HCT116 (cell line): ENCODE measurements at regions of chr12 and their contacts with region 1.

Region 1: GRCh38 chr12:55817346-55818139 is at the starts of genes ORMDL2 and SARNP:
- DNase-seq: peak; percentile 100
- ATAC-seq: peak; percentile 95
- H3K4me3 ChIP-seq: peak within 1 kb of the TSS; percentile 76 to 91
- H3K27ac ChIP-seq: peak within 1 kb of the TSS; percentile 62
- H3K4me1 ChIP-seq: peaks cover 14 to 20% of the 10 kb centered on the region in 2 experiments
- H3K27me3 ChIP-seq: no peaks in the 10 kb centered on the region
- CTCF ChIP-seq: no peak
- POLR2A ChIP-seq: peak; percentile 63
- RAD21 ChIP-seq: no peak
- total RNA-seq, gene ORMDL2: 25.5 TPM
- total RNA-seq, gene SARNP: 82.4 TPM

Region 2: DNA sequence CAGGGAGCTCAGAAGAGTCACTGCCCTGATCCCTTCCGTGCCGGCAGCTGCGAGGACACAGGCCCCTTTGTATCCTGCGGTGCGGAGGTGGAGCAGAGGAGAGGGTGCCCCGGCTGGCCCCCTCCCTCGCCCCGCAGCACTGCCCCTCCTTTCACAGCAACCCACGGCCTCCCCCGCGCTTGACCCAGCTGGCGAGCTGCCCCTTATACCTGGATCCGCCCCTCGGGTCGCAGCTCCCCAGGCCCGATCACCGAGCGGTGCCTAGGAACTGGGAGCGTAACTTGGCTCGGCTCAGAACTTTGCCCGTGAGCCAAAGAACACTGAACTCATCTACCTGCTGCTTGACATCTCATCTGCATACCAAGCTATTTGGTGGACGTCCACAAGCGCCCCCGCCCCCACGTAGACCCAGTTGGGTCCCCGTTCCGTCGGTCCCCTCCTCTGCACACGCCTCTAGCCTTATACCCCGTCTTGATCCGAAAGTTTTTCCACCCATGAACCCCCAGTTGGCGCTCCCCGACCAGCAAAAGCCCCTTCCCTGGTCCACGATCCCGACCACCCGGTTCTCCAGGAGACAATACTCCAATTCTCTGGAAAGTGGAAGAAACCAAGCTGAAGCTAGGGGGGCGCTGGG is 12.5 kb after region 1 on chr12:
- CTCF ChIA-PET with region 1: interaction called, 14 read pairs
- POLR2A ChIA-PET with region 1: interaction called, 59 read pairs
- RAD21 ChIA-PET with region 1: no interaction called
- intact Hi-C with region 1: no loop called
- DNase-seq: no peak
- ATAC-seq: peak; percentile 54
- H3K4me3 ChIP-seq: peak overlapping the region; percentile 93 to 97
- H3K27ac ChIP-seq: peak overlapping the region; percentile 87
- H3K4me1 ChIP-seq: peaks cover 16 to 29% of the 10 kb centered on the region in 2 experiments; a peak in 3 of 4 replicates
- H3K27me3 ChIP-seq: no peaks in the 10 kb centered on the region
- CTCF ChIP-seq: no peak
- POLR2A ChIP-seq: no peak
- RAD21 ChIP-seq: no peak

Region 3: DNA sequence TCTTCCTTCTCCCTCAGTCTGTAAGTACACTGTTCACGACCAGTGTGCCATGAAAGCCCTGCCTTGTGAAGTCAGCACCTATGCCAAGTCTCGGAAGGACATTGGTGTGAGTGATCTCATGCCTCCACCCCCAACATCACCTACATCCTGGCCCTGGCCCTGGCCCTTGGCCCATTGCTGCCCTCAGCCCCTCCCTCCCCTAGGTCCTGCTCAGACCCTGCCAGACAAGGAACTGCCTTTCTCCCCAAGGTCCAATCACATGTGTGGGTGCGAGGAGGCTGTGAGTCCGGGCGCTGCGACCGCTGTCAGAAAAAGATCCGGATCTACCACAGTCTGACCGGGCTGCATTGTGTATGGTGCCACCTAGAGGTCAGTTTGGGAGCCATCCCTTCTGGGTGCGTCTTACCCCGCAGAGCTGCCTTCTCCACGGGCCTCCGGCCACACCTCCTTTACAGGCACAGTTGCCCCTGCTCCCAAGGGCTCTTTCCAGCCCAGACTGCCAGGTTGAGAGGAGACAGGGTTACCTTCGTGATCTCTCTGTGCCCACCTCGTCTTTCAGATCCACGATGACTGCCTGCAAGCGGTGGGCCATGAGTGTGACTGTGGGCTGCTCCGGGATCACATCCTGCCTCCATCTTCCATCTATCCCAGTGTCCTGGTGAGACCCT is 122.7 kb after region 1 on chr12:
- CTCF ChIA-PET with region 1: interaction called, 4 read pairs
- POLR2A ChIA-PET with region 1: interaction called, 4 read pairs
- RAD21 ChIA-PET with region 1: no interaction called
- intact Hi-C with region 1: loop called (anchors 1 kb)
- DNase-seq: peak; percentile 59
- ATAC-seq: peak; percentile 100
- H3K4me3 ChIP-seq: no peak overlapping the region
- H3K27ac ChIP-seq: peak overlapping the region; percentile 26; the same call in 1 of the 2 replicates
- H3K4me1 ChIP-seq: peaks cover 4 to 25% of the 10 kb centered on the region in 2 experiments
- H3K27me3 ChIP-seq: no peaks in the 10 kb centered on the region
- CTCF ChIP-seq: peak; percentile 75 to 93 (median 91); a peak in 5 of 6 replicates
- POLR2A ChIP-seq: no peak
- RAD21 ChIP-seq: peak; percentile 91

Region 4: DNA sequence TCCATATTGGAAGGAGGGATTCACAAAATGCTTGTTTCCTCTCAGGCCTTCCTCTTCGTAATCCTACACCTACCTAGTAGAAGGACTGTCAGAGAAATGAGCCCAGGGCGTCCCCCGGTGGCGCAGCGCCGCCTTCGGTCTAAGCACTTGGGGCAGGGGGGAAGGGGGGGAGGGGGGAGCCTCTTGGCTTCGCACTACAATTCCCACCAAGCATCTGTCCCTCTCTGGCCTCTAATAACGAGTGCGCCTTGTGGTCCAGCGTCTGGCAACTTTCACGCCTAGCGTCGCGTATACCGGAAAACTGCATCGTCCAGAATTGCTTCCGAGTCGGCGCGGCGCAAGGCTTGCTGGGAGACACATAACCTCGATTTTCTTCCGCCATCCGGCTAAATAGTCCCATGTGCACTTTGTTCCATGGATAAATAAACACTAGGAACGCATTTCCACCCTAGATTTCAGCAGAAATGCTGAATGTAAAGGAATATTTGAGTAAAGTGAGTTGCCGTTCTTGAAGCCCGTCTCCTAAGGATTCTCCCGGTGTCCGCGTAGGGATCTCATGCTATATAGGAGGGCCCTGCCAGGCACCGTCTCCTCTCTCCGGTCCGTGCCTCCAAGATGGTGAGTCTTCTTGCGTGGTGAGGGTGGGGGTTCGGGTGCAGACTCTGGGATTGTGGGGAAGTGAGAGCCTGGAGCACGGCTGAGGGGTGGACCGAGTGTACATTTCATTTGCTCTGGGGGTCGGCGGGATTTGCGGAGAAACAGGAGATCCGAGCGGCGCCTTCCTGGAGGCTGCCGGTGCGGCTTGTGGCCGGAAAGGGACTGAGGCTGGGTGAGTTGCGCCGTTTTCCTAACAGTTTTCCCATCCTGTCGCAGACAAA is 224.2 kb after region 1 on chr12 and contains the start of gene RPS26:
- CTCF ChIA-PET with region 1: no interaction called
- POLR2A ChIA-PET with region 1: no interaction called
- RAD21 ChIA-PET with region 1: no interaction called
- intact Hi-C with region 1: loop called (anchors 2 kb)
- DNase-seq: peak; percentile 100
- ATAC-seq: peak; percentile 88
- H3K4me3 ChIP-seq: peak within 1 kb of the TSS; percentile 90 to 99
- H3K27ac ChIP-seq: peak within 1 kb of the TSS; percentile 90
- H3K4me1 ChIP-seq: peaks cover 16 to 39% of the 10 kb centered on the region in 2 experiments
- H3K27me3 ChIP-seq: no peaks in the 10 kb centered on the region
- CTCF ChIP-seq: peak; percentile 39 to 75 (median 42)
- POLR2A ChIP-seq: peak; percentile 99
- RAD21 ChIP-seq: peak; percentile 81
- total RNA-seq, gene RPS26: 70.2 TPM